ENCODE measurements at regions of chr5 and their contacts with region 1.

Region 1: GRCh38 chr5:141420855-141421496 is at the start of gene PCDHGA11:
- DNase-seq: peak; percentile 66

Region 2: DNA sequence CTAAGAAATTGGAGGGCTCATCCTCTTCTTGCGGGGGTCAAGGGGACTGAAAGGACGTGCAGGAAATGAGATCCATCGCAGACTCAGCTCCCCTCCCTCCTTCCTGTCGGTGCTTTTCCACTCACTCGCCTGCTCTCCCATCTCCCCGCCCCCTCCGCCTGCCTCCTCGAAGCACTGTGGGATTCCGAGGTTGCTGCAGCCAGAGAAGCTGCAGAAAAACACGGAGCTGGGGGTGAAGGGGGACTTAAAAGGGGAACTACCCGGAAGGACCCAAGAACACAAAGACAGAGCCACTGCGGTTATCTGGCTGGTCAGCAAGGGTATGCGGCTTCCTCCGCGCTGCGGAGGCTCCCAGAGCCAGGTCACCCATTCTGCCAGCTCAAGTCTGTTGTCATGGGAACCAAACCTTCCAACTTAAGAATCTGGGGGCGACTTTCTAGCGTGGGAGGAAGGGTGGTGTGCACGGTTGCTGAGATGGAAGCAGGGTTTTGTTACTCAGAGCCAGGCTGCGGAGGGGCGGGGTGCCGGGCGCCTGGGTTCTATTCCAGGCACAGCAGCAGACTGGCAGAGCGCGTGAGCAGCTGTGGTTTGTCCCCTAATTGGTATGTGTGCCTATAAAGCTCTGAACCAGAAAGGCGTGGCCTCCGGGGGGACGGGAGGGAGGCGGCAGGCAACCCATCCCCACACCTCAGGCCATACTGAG is 92.8 kb after region 1 on chr5:
- CTCF ChIA-PET with region 1: interaction called, 16 read pairs
- POLR2A ChIA-PET with region 1: no interaction called
- DNase-seq: no peak

Region 3: DNA sequence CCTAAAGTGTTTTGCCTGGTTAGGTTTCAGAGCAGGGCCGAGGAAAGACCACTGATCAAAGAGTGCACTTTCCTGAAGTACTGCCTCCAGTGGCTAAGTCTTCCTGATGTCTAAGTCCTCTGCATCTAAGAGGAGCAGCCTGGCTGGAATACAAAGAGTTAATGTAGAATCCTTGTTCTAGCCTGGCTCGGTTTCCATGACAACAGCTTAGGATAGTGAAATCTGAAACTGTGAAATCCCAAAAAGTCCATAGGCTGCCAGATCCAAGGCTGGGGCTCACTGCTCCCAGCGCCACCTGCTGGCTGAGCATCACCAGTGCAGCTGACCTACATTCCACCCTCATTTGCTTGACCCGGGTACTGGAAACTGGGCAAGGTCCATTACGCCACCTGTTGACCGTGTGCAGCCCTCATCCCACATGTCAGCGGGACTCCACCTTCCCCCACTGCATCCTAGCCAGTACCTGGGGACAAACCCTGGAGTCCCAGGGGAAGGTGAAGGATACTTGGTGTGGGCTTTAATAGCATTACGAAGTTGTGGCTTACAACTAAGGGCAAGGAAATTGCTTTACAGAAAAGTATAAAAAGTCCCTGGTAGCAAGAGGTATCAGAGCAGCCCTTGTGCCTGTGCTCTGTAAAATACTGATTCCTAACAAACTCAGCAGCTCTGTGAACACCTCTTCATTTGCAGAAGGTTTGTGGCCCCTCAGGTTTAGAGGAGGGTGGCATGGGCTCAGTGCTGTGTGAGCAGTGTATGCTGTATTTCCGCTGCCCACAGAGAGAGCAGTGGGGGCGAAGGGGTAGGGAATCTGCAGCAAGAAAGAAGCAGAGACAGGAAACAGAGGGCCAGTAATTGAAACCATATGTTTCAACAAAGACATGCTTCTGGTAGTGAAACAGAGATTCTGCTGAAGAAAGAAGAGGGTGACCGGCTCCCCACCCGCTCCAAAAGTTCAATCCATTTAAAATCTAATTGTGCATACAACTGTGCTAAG is 103.9 kb after region 1 on chr5:
- CTCF ChIA-PET with region 1: interaction called, 18 read pairs
- POLR2A ChIA-PET with region 1: no interaction called
- DNase-seq: peak; percentile 88

Region 4: DNA sequence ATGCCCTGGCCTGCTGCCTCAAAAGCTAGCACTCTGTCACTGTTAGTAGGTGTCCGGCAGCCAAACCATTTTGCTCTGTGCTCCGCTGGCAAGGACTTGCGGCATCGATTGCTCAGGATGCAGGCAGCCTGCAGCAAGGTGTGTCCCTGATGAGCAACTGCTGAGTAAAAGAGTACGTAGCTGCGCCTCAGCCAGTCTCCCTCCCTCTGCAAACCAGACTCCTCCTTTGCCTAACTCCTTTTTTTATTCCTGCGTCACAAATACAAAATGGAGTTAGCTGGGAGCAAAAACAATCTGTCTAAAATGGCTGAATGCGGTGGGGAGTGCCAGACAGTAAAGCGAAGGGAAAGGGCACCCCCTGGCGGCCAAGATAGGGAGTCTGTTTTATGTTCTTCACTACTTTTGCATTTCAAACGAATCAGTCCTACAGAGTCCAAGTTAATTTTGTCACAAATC is 136.7 kb after region 1 on chr5:
- CTCF ChIA-PET with region 1: interaction called, 15 read pairs
- POLR2A ChIA-PET with region 1: no interaction called
- DNase-seq: peak; percentile 67